Calu3 (cell line): ENCODE measurements at regions of chr2 and their contacts with region 1.

Region 1: GRCh38 chr2:208175069-208175839 is 11.9 kb upstream of the CRYGA start:
- DNase-seq: peak; percentile 82
- H3K4me3 Mint-ChIP-seq: no peak overlapping the region
- H3K27ac Mint-ChIP-seq: no peak overlapping the region
- H3K4me1 Mint-ChIP-seq: peaks cover 22% of the 10 kb centered on the region
- H3K27me3 Mint-ChIP-seq: no peaks in the 10 kb centered on the region
- CTCF ChIP-seq: peak; percentile 48

Region 2: GRCh38 chr2:208101716-208102631 is 73.3 kb before region 1 on chr2:
- CTCF ChIA-PET with region 1: interaction called, 15 read pairs
- intact Hi-C with region 1: loop called (anchors 5 kb)
- DNase-seq: peak; percentile 10
- H3K4me3 Mint-ChIP-seq: peak overlapping the region; percentile 14
- H3K27ac Mint-ChIP-seq: no peak overlapping the region
- H3K4me1 Mint-ChIP-seq: peaks cover 17% of the 10 kb centered on the region
- H3K27me3 Mint-ChIP-seq: peaks cover 10% of the 10 kb centered on the region
- CTCF ChIP-seq: no peak

Region 3: GRCh38 chr2:208142925-208143799 is 32.1 kb before region 1 on chr2:
- CTCF ChIA-PET with region 1: no interaction called
- intact Hi-C with region 1: no loop called
- DNase-seq: no peak
- H3K4me3 Mint-ChIP-seq: no peak overlapping the region
- H3K27ac Mint-ChIP-seq: peak overlapping the region; percentile 20
- H3K4me1 Mint-ChIP-seq: peaks cover 22% of the 10 kb centered on the region
- H3K27me3 Mint-ChIP-seq: no peaks in the 10 kb centered on the region
- CTCF ChIP-seq: no peak

Region 4: GRCh38 chr2:208240619-208241209 is 65.5 kb after region 1 on chr2:
- CTCF ChIA-PET with region 1: no interaction called
- intact Hi-C with region 1: no loop called
- DNase-seq: no peak
- H3K4me3 Mint-ChIP-seq: no peak overlapping the region
- H3K27ac Mint-ChIP-seq: no peak overlapping the region
- H3K4me1 Mint-ChIP-seq: peaks cover 25% of the 10 kb centered on the region
- H3K27me3 Mint-ChIP-seq: no peaks in the 10 kb centered on the region
- CTCF ChIP-seq: no peak

Region 5: DNA sequence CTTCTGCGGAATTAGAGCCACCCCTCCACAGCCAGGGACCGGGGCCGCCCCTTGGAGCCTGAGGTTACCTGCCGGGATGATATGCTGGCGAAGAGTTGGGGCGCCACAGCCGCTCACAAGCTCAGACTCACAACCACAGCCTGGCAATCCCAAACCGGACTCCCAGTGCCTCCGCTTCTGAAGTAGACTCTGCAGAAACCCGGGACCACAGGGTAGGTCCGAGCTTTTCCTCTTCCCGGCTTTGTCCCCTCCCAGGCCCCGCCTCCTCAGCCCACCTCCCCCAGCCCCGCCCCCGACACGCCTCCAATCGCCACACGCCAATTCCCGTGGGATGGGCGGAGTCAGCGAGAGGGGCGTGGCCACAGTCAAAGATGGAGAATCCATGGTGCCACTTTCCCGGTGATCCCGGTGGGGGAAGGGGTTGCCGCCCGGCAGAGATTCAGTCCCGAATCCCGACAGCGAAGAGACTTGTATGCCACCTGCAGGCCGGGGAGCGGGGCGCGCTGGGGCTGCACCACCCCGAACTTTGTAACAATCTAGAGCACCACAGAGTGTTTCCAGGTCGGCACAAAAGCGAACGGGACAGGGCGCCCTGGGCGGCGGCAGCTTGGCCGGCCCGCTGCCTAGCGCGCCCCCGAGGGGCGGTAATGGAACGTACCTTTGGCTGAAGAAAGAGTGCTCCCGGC is 79.8 kb after region 1 on chr2 and contains the start of gene IDH1:
- CTCF ChIA-PET with region 1: interaction called, 46 read pairs
- intact Hi-C with region 1: loop called (anchors 1 kb)
- DNase-seq: peak; percentile 99
- H3K4me3 Mint-ChIP-seq: peak within 1 kb of the TSS; percentile 100
- H3K27ac Mint-ChIP-seq: peak within 1 kb of the TSS; percentile 91
- H3K4me1 Mint-ChIP-seq: peaks cover 27% of the 10 kb centered on the region
- H3K27me3 Mint-ChIP-seq: no peaks in the 10 kb centered on the region
- CTCF ChIP-seq: peak; percentile 68
- total RNA-seq, gene IDH1: 166 TPM in 2 replicates

Region 6: DNA sequence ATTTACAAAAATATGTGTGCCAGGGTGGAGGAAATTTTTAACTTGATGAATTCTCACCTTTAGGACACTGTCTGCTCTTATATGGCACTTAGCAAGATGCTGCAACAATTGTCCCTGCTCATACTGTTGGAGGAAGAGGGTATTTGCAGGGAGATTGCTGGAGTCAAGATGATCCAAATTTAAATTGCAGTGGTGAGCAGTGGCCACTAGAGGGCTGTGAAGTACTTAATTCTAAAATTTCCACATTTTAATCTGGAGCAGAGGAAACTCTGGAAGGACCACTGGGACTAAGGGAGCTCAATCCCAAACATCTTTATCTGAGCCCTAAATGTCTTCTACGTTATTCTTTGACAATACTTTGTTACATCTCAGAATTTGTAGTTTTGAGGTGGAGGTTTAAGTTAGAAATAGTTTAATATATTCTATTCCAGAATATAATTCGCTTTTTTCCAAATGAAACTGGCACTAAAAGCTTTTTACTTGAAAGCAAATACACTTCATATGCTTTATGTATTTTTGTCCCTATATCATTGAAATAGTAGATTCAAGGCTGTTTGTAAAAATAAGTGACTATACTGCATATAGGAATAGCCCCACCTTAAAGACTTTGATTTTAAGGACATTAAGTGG is 198.3 kb after region 1 on chr2:
- CTCF ChIA-PET with region 1: no interaction called
- intact Hi-C with region 1: loop called (anchors 10 kb)
- DNase-seq: peak; percentile 35
- H3K4me3 Mint-ChIP-seq: no peak overlapping the region
- H3K27ac Mint-ChIP-seq: no peak overlapping the region
- H3K4me1 Mint-ChIP-seq: no peaks in the 10 kb centered on the region
- H3K27me3 Mint-ChIP-seq: no peaks in the 10 kb centered on the region
- CTCF ChIP-seq: peak; percentile 78